ENCODE measurements at regions of chrX and their contacts with region 1.

Region 1: DNA sequence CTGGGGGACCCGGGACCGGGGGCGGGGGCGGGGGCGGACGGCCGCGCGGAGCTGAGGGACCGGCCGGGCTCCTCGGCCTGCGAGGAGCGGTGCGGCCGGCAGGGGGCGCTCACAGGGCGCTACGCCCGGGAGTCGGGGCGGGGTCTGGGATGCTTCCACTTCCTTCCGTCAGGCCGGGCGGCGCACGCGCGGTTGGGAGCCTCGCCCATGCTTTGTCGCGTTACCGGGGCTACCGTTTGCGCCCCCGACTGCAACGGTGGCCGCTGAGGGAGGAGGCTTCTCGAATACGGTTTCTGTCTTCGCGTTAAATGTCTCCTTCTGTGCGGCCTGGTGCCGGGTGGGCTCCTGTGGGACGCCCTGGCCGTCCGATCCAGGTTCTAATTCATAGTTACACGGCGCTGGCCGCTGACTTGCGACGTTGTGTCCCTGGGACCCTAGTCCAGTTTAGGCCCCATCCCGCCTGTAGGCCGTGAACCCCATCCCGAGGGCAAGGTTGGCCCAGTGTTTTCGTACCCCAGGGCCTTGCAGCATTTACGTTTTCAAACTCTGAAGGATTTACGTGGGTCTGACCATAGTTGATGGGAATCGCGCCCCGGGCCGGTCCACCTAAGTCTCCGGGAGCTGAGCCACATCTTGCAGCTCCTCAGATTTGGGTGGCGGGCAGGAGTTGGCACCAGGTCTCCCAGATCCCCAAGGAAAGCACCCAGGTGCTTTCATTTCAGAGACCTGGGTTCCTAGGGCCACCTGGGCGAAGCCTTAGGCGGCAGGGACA is 549 bp downstream of the MSL3 start:
- DNase-seq: peak; percentile 90
- ATAC-seq: peak; percentile 66
- H3K4me3 ChIP-seq: peak overlapping the region; percentile 70 to 86 (median 74)
- H3K4me3 Mint-ChIP-seq: peak overlapping the region; percentile 93
- H3K27ac ChIP-seq: peak overlapping the region; percentile 89
- H3K27ac Mint-ChIP-seq: peak overlapping the region; percentile 86
- H3K4me1 ChIP-seq: peaks cover 7 to 22% of the 10 kb centered on the region in 2 donors
- H3K4me1 Mint-ChIP-seq: peaks cover 32% of the 10 kb centered on the region
- H3K27me3 ChIP-seq: no peaks in the 10 kb centered on the region
- H3K27me3 Mint-ChIP-seq: no peaks in the 10 kb centered on the region
- CTCF ChIP-seq: peak; percentile 68

Region 2: GRCh38 chrX:11111038-11111851 is 647.3 kb before region 1 on chrX and contains the start of gene HCCS:
- CTCF ChIA-PET with region 1: no interaction called
- POLR2A ChIA-PET with region 1: no interaction called
- intact Hi-C with region 1: loop called (anchors 2 kb)
- DNase-seq: peak; percentile 90
- ATAC-seq: peak; percentile 82
- H3K4me3 ChIP-seq: peak within 1 kb of the TSS; percentile 42 to 84 (median 75)
- H3K4me3 Mint-ChIP-seq: no peak within 1 kb of the TSS
- H3K27ac ChIP-seq: peak within 1 kb of the TSS; percentile 93 to 96
- H3K27ac Mint-ChIP-seq: peak within 1 kb of the TSS; percentile 95
- H3K4me1 ChIP-seq: peaks cover 18 to 34% of the 10 kb centered on the region in 2 donors
- H3K4me1 Mint-ChIP-seq: peaks cover 36% of the 10 kb centered on the region
- H3K27me3 ChIP-seq: no peaks in the 10 kb centered on the region
- H3K27me3 Mint-ChIP-seq: no peaks in the 10 kb centered on the region
- CTCF ChIP-seq: no peak
- total RNA-seq, gene HCCS: 16.7 and 19.1 TPM in 2 replicates

Region 3: GRCh38 chrX:11558972-11559371 is 199.6 kb before region 1 on chrX:
- CTCF ChIA-PET with region 1: no interaction called
- POLR2A ChIA-PET with region 1: no interaction called
- intact Hi-C with region 1: no loop called
- DNase-seq: peak; percentile 47
- ATAC-seq: peak; percentile 36
- H3K4me3 ChIP-seq: no peak overlapping the region
- H3K4me3 Mint-ChIP-seq: no peak overlapping the region
- H3K27ac ChIP-seq: no peak overlapping the region
- H3K27ac Mint-ChIP-seq: no peak overlapping the region
- H3K4me1 ChIP-seq: no peaks in the 10 kb centered on the region
- H3K4me1 Mint-ChIP-seq: no peaks in the 10 kb centered on the region
- H3K27me3 ChIP-seq: no peaks in the 10 kb centered on the region
- H3K27me3 Mint-ChIP-seq: peaks cover 2% of the 10 kb centered on the region
- CTCF ChIP-seq: peak; percentile 64

Region 4: DNA sequence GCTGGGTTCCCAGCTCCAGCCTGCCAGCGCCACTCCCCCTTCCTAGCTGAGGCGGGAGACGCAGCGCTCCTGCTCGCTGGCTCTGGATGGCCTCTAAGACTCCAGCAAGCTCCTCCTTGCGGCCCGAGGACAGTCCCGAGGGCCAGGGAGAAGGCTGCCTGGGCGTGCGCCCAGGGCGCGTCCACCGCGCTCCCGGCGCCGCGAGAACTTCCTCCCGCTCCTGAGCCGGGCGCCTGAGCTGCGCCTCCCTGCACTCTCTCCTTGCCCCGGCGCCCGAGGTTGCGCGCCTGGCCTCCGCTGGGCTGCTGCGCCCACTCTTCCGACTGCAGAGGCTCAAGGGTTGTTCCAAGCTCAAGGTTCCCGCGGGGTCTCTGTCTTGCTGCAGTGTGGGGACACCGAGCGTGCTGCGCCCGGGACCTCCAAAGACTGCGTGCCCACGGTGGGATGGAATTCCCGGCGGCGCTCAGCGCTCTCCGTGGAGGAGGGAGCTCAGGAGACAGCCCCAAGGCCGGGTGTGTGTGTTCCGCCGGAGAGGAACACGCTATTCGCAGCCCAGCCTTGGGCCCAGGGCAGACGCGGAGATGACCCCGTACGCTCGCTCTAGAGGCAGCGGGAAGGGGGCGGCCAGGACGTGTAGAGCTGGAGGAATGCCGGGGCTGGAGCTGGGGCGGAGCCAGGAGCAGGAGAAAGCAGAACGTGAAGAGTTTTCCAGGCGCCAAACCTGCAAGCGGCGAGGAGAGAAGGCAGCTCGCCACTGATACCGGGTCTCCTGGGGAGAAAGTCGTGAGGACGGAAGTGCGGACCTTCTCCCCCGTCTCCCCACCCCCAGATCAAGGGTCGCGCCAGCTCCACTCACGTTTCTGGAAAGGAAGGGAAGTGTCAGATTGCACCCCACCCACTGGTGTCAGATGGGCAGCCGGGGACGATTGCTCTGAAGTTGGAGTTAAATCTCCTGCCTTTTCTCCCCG is 93.2 kb before region 1 on chrX and contains the start of gene ARHGAP6:
- CTCF ChIA-PET with region 1: no interaction called
- POLR2A ChIA-PET with region 1: no interaction called
- intact Hi-C with region 1: no loop called
- DNase-seq: peak; percentile 2
- ATAC-seq: no peak
- H3K4me3 ChIP-seq: no peak within 1 kb of the TSS
- H3K4me3 Mint-ChIP-seq: peak within 1 kb of the TSS; percentile 10
- H3K27ac ChIP-seq: no peak within 1 kb of the TSS
- H3K27ac Mint-ChIP-seq: no peak within 1 kb of the TSS
- H3K4me1 ChIP-seq: no peaks in the 10 kb centered on the region
- H3K4me1 Mint-ChIP-seq: peaks cover 4% of the 10 kb centered on the region
- H3K27me3 ChIP-seq: peaks cover 0 to 15% (median 1%) of the 10 kb centered on the region in 4 experiments
- H3K27me3 Mint-ChIP-seq: peaks cover 37% of the 10 kb centered on the region
- CTCF ChIP-seq: no peak
- total RNA-seq, gene ARHGAP6: 2.1 and 2.6 TPM in 2 replicates

Region 5: GRCh38 chrX:11792461-11793421 is 34.2 kb after region 1 on chrX:
- CTCF ChIA-PET with region 1: no interaction called
- POLR2A ChIA-PET with region 1: no interaction called
- intact Hi-C with region 1: loop called (anchors 2 kb)
- DNase-seq: peak; percentile 50
- ATAC-seq: peak; percentile 94
- H3K4me3 ChIP-seq: no peak overlapping the region
- H3K4me3 Mint-ChIP-seq: peak overlapping the region; percentile 53
- H3K27ac ChIP-seq: peak overlapping the region; percentile 44 to 48
- H3K27ac Mint-ChIP-seq: peak overlapping the region; percentile 88
- H3K4me1 ChIP-seq: peaks cover 11 to 17% of the 10 kb centered on the region in 2 donors
- H3K4me1 Mint-ChIP-seq: peaks cover 31% of the 10 kb centered on the region
- H3K27me3 ChIP-seq: no peaks in the 10 kb centered on the region
- H3K27me3 Mint-ChIP-seq: no peaks in the 10 kb centered on the region
- CTCF ChIP-seq: no peak